ENCODE measurements at regions of chr10 and their contacts with region 1.

Region 1: DNA sequence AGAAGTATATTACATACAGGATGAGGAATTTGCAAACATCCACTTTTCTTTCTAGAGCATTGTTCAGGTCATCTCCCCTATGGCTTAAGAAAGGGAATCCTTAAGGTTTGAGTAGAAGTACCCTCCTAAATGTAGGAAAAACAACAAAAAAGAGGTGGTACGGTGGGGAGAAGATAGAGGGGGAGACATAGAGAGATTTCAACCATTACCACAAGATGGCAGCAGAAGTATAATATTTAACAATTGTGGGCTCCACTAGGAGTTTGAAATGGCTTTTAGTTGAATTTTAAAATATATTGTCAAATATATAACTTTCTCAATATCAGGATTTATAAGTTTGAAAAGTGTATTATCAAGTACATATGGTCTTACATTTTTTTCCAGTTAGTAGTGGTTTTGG is 72.7 kb upstream of the PRKG1 start:
- DNase-seq: no peak
- ATAC-seq: peak in 3 of 4 donors; percentile 55 to 70 (median 67)
- H3K4me3 ChIP-seq: no peak overlapping the region
- H3K27ac ChIP-seq: peak overlapping the region in 5 of 12 donors; percentile 17 to 53 (median 26)
- H3K4me1 ChIP-seq: peaks cover 0 to 63% (median 6%) of the 10 kb centered on the region in 12 donors
- H3K27me3 ChIP-seq: no peaks in the 10 kb centered on the region
- CTCF ChIP-seq: peak; percentile 38 to 75 (median 59)
- POLR2A ChIP-seq: no peak

Region 2: DNA sequence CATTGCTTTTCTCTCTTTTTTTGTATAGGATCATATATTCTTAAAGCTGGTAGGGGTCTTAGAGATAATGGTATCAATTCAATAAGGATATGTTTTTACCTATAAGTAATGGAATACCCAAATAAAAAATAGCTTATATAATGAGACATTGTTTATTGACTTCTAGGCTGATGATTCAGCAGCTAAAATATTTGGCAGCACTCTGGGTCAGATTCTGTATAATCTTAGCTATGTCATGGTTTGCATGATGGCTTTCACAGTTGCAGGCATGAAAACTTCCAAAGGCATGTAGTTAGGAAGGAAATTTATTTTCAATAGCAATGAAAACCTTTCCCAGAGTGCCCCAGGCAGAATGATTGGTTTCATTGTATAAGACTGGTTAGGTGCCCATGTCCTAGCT is 84.1 kb before region 1 on chr10:
- intact Hi-C with region 1: no loop called
- DNase-seq: no peak
- ATAC-seq: peak in 2 of 4 donors; percentile 45 to 57
- H3K4me3 ChIP-seq: no peak overlapping the region
- H3K27ac ChIP-seq: no peak overlapping the region
- H3K4me1 ChIP-seq: peaks cover 0 to 10% (median 2%) of the 10 kb centered on the region in 12 donors
- H3K27me3 ChIP-seq: no peaks in the 10 kb centered on the region
- CTCF ChIP-seq: no peak
- POLR2A ChIP-seq: no peak

Region 3: DNA sequence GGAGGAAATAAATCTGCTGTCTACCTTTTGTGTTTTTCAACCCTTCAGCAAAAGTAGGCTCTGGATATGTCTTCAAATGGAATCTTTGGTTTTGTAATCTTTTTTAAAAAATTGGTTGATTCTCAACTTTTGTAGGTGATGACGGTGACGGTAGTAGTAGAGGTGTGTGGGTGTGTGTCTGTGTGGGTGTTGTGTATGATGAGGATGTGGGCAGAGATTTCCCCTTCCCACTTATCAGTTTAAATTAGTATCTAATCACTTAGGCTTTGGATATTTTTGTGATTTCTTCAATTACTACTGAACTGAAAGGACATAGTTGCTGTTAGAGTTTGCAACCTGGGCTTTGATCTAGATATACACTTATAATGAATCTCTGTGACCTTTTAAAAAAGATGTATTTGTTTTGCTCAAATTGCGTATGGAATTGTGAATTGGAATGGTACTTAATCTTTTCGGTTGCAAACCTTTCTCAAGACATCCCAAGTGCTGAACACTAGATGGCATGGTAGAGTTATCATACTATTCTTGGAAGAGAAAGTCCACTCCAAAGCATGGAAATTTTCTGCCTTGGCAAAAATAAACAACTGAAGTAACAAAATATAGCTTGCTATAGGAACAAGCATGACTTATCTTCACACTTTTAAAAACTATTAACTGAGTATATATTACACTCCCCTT is 64.2 kb before region 1 on chr10:
- intact Hi-C with region 1: no loop called
- DNase-seq: no peak
- ATAC-seq: peak in 1 of 4 donors; percentile 31
- H3K4me3 ChIP-seq: no peak overlapping the region
- H3K27ac ChIP-seq: no peak overlapping the region
- H3K4me1 ChIP-seq: peaks cover 0 to 7% (median 0%) of the 10 kb centered on the region in 12 donors
- H3K27me3 ChIP-seq: no peaks in the 10 kb centered on the region
- CTCF ChIP-seq: peak in 10 of 12 donors; percentile 25 to 67 (median 50)
- POLR2A ChIP-seq: no peak

Region 4: GRCh38 chr10:52004342-52004949 is 1002.9 kb after region 1 on chr10:
- intact Hi-C with region 1: loop called in 1 of 10 experiments (anchors 10 kb)
- DNase-seq: no peak
- ATAC-seq: no peak
- H3K4me3 ChIP-seq: no peak overlapping the region
- H3K27ac ChIP-seq: no peak overlapping the region
- H3K4me1 ChIP-seq: peaks cover 0 to 7% (median 0%) of the 10 kb centered on the region in 12 donors
- H3K27me3 ChIP-seq: no peaks in the 10 kb centered on the region
- CTCF ChIP-seq: peak; percentile 35 to 69 (median 51)
- POLR2A ChIP-seq: no peak